ENCODE measurements at regions of chr1 and their contacts with region 1.

Region 1: DNA sequence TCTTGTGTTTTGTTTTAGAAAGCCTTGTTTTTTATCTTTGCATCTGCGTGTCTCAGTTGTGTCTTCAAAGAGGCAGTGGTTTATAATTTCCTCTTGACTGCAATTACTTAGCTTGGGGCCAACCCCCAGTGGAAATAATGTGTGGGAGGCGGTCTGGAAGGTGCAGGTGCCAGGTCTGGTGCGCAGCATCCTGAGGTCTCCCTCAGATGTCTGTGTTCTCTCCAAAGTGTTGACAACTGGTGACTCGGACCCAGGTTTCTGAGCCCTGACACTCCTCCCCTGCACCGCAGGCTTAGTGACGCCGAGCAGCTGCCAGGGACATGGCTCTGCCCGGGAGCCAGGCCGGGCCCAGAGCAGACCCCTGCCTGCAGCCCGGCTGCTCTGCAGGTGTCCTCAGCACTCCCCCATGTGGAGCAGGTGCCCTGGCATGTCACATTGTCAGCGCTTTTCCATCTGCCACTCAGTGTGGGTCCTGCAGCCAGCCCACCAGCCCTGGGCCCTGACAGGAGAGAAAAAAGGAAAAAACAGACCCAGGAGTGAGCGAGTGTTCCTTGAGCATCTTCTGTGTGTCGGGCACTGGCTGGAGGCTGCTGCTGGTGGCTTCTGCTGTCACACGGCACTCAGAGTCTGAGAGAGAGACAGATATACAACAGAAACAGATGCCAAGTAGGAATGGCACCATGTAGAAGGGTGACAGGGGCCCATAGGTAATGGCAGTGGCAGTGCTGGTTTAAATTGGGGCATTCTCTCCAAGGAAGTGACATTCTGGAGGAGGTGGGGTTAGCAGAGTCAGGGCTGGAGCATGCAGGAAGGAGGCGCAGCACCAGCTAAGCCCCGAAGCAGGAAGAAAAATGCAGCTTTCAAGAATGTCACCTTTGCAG is 24.8 kb upstream of the SELENON start:
- DNase-seq: peak; percentile 89 to 97 (median 91)
- H3K4me3 ChIP-seq: peak overlapping the region; percentile 8 to 47
- H3K4me3 Mint-ChIP-seq: peak overlapping the region; percentile 66 to 90 (median 82)
- H3K27ac ChIP-seq: peak overlapping the region; percentile 45
- H3K27ac Mint-ChIP-seq: peak overlapping the region; percentile 90 to 99 (median 93)
- H3K4me1 ChIP-seq: peaks cover 64% of the 10 kb centered on the region
- H3K4me1 Mint-ChIP-seq: peaks cover 48 to 73% (median 51%) of the 10 kb centered on the region in 4 donors
- H3K27me3 ChIP-seq: no peaks in the 10 kb centered on the region
- H3K27me3 Mint-ChIP-seq: no peaks in the 10 kb centered on the region

Region 2: DNA sequence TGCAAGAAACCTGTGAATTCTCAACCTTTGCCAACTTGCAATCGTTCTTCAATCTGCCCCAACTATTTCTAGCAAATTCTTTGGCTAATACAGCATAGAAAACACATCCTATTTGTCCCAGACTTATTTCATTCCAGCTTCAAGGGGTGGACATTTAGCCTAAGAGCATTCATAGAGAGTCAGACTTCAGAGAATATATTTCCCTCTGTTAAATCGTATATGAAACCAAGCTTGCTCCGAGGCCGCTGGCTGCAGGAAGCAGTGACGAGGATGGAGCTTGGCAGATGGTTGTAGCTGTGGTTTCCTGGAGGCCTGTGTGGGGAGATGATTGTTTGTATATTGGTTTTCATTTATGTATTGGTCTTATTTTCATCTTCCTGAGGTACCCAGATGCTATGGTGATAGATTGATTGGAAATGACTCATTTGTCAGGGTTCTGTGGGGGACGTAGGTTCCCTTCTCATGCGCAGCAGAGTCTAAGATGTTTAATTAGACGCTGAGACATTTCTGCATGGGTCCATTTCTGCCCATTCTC is 132.5 kb before region 1 on chr1:
- CTCF ChIA-PET with region 1: interaction called, 3 read pairs
- POLR2A ChIA-PET with region 1: interaction called, 23 read pairs
- intact Hi-C with region 1: no loop called
- DNase-seq: peak; percentile 84 to 89 (median 86)
- H3K4me3 ChIP-seq: peak overlapping the region in 1 of 2 donors; percentile 16
- H3K4me3 Mint-ChIP-seq: peak overlapping the region; percentile 71 to 92 (median 81)
- H3K27ac ChIP-seq: peak overlapping the region; percentile 54
- H3K27ac Mint-ChIP-seq: peak overlapping the region; percentile 87 to 99 (median 94)
- H3K4me1 ChIP-seq: peaks cover 67% of the 10 kb centered on the region
- H3K4me1 Mint-ChIP-seq: peaks cover 50 to 81% (median 64%) of the 10 kb centered on the region in 4 donors
- H3K27me3 ChIP-seq: no peaks in the 10 kb centered on the region
- H3K27me3 Mint-ChIP-seq: no peaks in the 10 kb centered on the region

Region 3: GRCh38 chr1:25675729-25676476 is 99.3 kb before region 1 on chr1:
- CTCF ChIA-PET with region 1: interaction called, 6 read pairs
- POLR2A ChIA-PET with region 1: interaction called, 21 read pairs
- intact Hi-C with region 1: loop called (anchors 1 kb)
- DNase-seq: peak; percentile 74 to 83 (median 78)
- H3K4me3 ChIP-seq: peak overlapping the region in 1 of 2 donors; percentile 18
- H3K4me3 Mint-ChIP-seq: peak overlapping the region; percentile 74 to 89 (median 85)
- H3K27ac ChIP-seq: no peak overlapping the region
- H3K27ac Mint-ChIP-seq: peak overlapping the region; percentile 85 to 95 (median 92)
- H3K4me1 ChIP-seq: peaks cover 71% of the 10 kb centered on the region
- H3K4me1 Mint-ChIP-seq: peaks cover 66 to 88% (median 77%) of the 10 kb centered on the region in 4 donors
- H3K27me3 ChIP-seq: no peaks in the 10 kb centered on the region
- H3K27me3 Mint-ChIP-seq: no peaks in the 10 kb centered on the region

Region 4: GRCh38 chr1:25704267-25704691 is 70.9 kb before region 1 on chr1:
- CTCF ChIA-PET with region 1: no interaction called
- POLR2A ChIA-PET with region 1: interaction called, 7 read pairs
- intact Hi-C with region 1: loop called (anchors 1 kb)
- DNase-seq: peak in 4 of 5 donors; percentile 30 to 57 (median 46)
- H3K4me3 ChIP-seq: no peak overlapping the region
- H3K4me3 Mint-ChIP-seq: peak overlapping the region in 3 of 8 donors; percentile 0 to 19 (median 18)
- H3K27ac ChIP-seq: no peak overlapping the region
- H3K27ac Mint-ChIP-seq: peak overlapping the region; percentile 13 to 85 (median 73)
- H3K4me1 ChIP-seq: peaks cover 33% of the 10 kb centered on the region
- H3K4me1 Mint-ChIP-seq: peaks cover 32 to 57% (median 41%) of the 10 kb centered on the region in 4 donors
- H3K27me3 ChIP-seq: no peaks in the 10 kb centered on the region
- H3K27me3 Mint-ChIP-seq: no peaks in the 10 kb centered on the region

Region 5: GRCh38 chr1:25754470-25755181 is 20.5 kb before region 1 on chr1:
- CTCF ChIA-PET with region 1: no interaction called
- POLR2A ChIA-PET with region 1: interaction called, 13 read pairs
- intact Hi-C with region 1: loop called (anchors 2 kb)
- DNase-seq: no peak
- H3K4me3 ChIP-seq: no peak overlapping the region
- H3K4me3 Mint-ChIP-seq: peak overlapping the region in 4 of 8 donors; percentile 15 to 41 (median 37)
- H3K27ac ChIP-seq: no peak overlapping the region
- H3K27ac Mint-ChIP-seq: peak overlapping the region; percentile 46 to 84 (median 68)
- H3K4me1 ChIP-seq: peaks cover 18% of the 10 kb centered on the region
- H3K4me1 Mint-ChIP-seq: peaks cover 21 to 49% (median 22%) of the 10 kb centered on the region in 4 donors
- H3K27me3 ChIP-seq: no peaks in the 10 kb centered on the region
- H3K27me3 Mint-ChIP-seq: no peaks in the 10 kb centered on the region

Region 6: DNA sequence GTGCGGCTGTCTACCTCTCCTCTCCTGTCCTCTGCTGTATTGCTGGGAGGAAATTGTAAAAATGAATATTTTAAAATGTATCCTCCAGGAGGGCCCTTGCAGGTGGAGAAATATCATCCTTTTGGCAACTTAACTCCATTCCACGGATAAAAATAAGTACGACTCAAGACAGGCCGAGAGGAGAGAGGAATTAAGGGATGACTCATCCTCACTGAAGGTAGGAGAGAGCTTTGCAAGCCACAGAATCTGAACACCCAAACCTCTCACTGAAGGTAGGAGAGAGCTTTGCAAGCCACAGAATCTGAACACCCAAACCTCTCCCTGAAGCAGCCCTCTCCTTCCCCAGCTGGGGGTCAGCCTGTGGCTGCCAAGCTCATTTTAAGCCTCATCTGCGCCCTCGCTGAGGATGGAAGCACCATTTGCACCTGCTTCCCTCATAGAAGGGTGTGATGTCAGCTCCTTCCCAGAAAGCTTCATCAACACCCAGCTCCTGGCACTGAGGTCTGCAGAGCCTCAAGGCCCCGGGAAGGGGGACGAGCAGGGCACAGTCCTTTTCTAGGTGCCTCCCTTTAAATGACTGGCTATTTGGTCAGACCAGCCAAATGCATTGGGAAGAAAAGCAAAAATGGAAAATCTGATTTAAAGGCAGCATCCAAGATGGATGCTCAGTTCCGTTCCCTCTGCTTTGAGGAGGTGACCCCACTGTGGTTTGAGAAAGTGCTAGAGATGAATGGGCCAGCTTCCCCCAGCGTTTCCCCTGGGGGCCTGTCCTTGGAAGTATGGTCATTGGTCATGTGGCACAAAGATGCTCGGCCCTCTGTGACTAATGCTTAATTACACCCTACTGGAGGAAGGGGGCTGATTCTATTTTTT is 12.0 kb after region 1 on chr1:
- CTCF ChIA-PET with region 1: interaction called, 3 read pairs
- POLR2A ChIA-PET with region 1: interaction called, 22 read pairs
- intact Hi-C with region 1: no loop called
- DNase-seq: no peak
- H3K4me3 ChIP-seq: no peak overlapping the region
- H3K4me3 Mint-ChIP-seq: no peak overlapping the region
- H3K27ac ChIP-seq: no peak overlapping the region
- H3K27ac Mint-ChIP-seq: peak overlapping the region in 2 of 7 donors; percentile 2 to 61
- H3K4me1 ChIP-seq: no peaks in the 10 kb centered on the region
- H3K4me1 Mint-ChIP-seq: peaks cover 0 to 4% (median 1%) of the 10 kb centered on the region in 4 donors
- H3K27me3 ChIP-seq: no peaks in the 10 kb centered on the region
- H3K27me3 Mint-ChIP-seq: no peaks in the 10 kb centered on the region

Region 7: DNA sequence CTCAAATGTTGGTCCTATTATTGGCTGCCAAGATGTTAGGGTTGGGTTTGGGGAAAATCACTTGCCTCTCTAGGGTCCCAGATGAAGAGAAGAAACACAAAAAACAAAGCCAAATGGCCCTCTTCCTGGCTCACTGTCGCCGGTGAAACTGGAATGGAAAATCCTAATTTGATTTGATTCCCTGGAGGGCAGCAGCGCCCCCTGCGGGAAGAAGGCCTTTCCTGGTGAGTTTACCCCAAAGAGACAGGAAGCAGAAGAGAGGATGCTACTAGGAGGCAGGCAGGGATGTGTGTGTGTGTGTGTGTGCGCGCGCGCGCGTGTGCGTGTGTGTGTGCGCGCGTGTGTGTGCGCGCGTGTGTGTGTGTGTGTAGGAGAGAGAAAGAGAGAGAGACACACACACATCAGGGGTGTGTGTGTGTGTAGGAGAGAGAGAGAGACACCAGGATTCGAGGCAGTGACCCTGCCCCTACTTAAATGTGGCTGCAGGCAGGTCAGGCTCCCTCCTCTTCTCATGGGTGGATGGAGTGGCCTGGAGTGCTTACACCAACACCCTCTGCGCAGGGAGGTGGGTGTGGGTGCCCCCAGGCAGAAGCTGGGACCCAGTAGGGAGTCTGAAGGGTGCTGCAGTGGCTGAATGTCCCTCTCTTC is 21.8 kb after region 1 on chr1:
- CTCF ChIA-PET with region 1: interaction called, 32 read pairs
- POLR2A ChIA-PET with region 1: interaction called, 27 read pairs
- intact Hi-C with region 1: loop called (anchors 1 kb)
- DNase-seq: peak; percentile 78 to 87 (median 81)
- H3K4me3 ChIP-seq: peak overlapping the region in 1 of 2 donors; percentile 44
- H3K4me3 Mint-ChIP-seq: peak overlapping the region; percentile 58 to 88 (median 80)
- H3K27ac ChIP-seq: peak overlapping the region; percentile 45
- H3K27ac Mint-ChIP-seq: peak overlapping the region; percentile 86 to 98 (median 95)
- H3K4me1 ChIP-seq: peaks cover 54% of the 10 kb centered on the region
- H3K4me1 Mint-ChIP-seq: peaks cover 32 to 66% (median 49%) of the 10 kb centered on the region in 4 donors
- H3K27me3 ChIP-seq: no peaks in the 10 kb centered on the region
- H3K27me3 Mint-ChIP-seq: peaks cover 0 to 2% of the 10 kb centered on the region in 2 donors

Region 8: DNA sequence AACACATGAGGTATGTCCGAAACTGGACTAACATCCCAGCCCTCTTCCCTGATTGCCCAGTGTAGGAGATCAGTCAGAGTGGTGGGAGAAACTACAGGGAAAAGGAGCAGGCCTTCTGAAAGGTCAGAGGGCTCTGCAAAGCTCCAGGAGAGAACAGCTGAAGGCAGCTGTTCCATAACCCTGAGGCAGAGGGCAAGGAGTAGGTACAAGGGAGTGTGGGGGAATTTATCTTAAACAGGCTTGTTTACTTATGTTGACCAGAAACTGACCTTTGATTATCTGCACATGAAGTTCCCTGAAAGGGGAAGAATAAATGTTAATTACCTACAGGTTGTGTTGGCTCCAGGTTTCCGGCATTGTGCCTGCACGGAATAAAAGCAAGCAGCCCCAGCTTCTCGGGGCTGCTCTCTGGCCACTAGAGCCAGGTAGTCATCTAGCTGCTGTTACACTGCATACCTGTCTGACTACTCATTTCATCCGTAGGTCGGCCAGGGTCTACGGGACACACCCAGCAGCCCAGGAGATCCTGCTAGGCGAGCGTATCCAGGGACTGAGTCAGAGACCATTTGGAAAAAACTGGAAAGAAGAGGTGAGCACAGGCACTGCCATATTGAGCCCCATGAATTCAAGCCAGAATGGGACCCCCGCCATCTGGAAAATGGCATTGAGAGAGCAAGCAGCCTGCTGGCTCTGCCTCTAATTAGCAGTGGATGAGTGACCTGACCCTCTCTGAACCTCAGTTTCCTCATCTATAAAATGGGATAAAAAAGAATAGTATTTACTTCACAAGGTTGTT is 115.3 kb after region 1 on chr1:
- CTCF ChIA-PET with region 1: no interaction called
- POLR2A ChIA-PET with region 1: no interaction called
- intact Hi-C with region 1: no loop called
- DNase-seq: no peak
- H3K4me3 ChIP-seq: no peak overlapping the region
- H3K4me3 Mint-ChIP-seq: no peak overlapping the region
- H3K27ac ChIP-seq: no peak overlapping the region
- H3K27ac Mint-ChIP-seq: peak overlapping the region in 2 of 7 donors; percentile 1 to 19
- H3K4me1 ChIP-seq: peaks cover 5% of the 10 kb centered on the region
- H3K4me1 Mint-ChIP-seq: peaks cover 3 to 4% (median 4%) of the 10 kb centered on the region in 4 donors
- H3K27me3 ChIP-seq: no peaks in the 10 kb centered on the region
- H3K27me3 Mint-ChIP-seq: no peaks in the 10 kb centered on the region

Region 9: DNA sequence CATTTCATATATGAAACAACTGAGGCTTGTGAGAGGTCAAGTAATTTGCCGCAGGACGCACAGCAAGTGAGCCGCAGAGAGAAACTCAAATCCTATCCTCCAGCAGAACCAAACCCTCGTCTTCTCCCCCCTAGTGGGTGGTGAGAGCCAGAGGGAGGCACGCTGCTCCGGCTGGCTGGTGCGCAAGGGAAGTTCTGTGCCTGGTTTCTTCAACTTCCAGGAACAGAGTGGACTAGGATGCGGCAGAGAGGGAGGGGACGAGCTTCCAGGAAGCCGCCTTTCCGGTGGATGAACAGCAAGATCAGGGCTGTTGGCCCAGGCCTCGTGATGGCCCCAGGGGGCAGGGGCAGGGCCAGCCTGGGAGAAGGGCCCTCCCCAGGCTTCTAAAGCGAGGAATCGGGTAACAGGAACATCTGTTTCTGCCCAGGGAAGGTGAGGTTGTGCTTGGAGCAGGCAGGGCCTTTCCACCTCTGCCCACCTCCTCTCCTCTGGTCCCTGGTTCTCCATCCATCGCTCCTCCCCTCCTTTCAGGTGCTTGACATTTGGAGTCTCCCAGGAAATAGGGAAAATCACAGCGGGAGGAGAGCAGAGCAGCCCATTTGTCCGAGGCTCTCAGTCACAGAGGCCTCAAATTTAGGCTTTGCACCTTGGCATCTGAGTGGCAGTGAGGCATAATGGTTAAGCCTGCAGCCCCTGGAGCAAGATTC is 319.7 kb after region 1 on chr1:
- CTCF ChIA-PET with region 1: no interaction called
- POLR2A ChIA-PET with region 1: no interaction called
- intact Hi-C with region 1: no loop called
- DNase-seq: no peak
- H3K4me3 ChIP-seq: no peak overlapping the region
- H3K4me3 Mint-ChIP-seq: no peak overlapping the region
- H3K27ac ChIP-seq: no peak overlapping the region
- H3K27ac Mint-ChIP-seq: no peak overlapping the region
- H3K4me1 ChIP-seq: no peaks in the 10 kb centered on the region
- H3K4me1 Mint-ChIP-seq: no peaks in the 10 kb centered on the region
- H3K27me3 ChIP-seq: no peaks in the 10 kb centered on the region
- H3K27me3 Mint-ChIP-seq: peaks cover 11 to 18% of the 10 kb centered on the region in 2 donors

Measured in CD4-positive, alpha-beta memory T cell (primary cell).